GM12878 (cell line): ENCODE measurements at regions of chr15 and their contacts with region 1.

Region 1: GRCh38 chr15:57561041-57561711 is 30.5 kb upstream of the MYZAP start:
- DNase-seq: peak; percentile 26
- ATAC-seq: peak; percentile 95
- H3K4me3 ChIP-seq: no peak overlapping the region
- H3K27ac ChIP-seq: no peak overlapping the region
- H3K4me1 ChIP-seq: peaks cover 3% of the 10 kb centered on the region; the same call in 1 of the 2 replicates
- H3K27me3 ChIP-seq: no peaks in the 10 kb centered on the region
- CTCF ChIP-seq: peak; percentile 82 to 86 (median 83)
- EP300 ChIP-seq: no peak
- POLR2A ChIP-seq: no peak
- RAD21 ChIP-seq: peak; percentile 66

Region 2: DNA sequence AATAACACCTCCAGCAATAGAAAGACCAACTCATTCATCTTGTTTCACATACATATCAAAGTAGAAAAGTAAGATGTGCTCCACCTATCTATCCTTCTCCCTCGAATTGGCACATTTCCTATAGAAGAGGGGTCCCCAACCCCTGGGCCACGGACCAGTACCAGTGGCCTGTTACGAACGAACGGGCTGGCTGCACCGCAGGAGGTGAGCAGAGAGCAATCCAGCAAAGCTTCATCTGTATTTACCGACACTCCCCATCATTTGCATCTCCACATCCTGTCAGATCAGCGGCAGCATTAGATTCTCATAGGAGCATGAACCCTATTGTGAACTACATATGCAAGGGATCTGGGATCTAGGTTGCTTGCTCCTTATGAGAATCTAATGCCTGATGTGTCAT is 279.9 kb before region 1 on chr15:
- CTCF ChIA-PET with region 1: no interaction called
- POLR2A ChIA-PET with region 1: no interaction called
- RAD21 ChIA-PET with region 1: no interaction called
- SMC1A ChIA-PET with region 1: no interaction called
- in situ Hi-C with region 1: no loop called
- intact Hi-C with region 1: no loop called
- DNase-seq: no peak
- ATAC-seq: peak; percentile 63
- H3K4me3 ChIP-seq: peak overlapping the region; percentile 16; the same call in 1 of the 2 replicates
- H3K27ac ChIP-seq: no peak overlapping the region
- H3K4me1 ChIP-seq: peaks cover 37% of the 10 kb centered on the region
- H3K27me3 ChIP-seq: no peaks in the 10 kb centered on the region
- CTCF ChIP-seq: no peak
- EP300 ChIP-seq: no peak
- POLR2A ChIP-seq: no peak
- RAD21 ChIP-seq: no peak

Region 3: DNA sequence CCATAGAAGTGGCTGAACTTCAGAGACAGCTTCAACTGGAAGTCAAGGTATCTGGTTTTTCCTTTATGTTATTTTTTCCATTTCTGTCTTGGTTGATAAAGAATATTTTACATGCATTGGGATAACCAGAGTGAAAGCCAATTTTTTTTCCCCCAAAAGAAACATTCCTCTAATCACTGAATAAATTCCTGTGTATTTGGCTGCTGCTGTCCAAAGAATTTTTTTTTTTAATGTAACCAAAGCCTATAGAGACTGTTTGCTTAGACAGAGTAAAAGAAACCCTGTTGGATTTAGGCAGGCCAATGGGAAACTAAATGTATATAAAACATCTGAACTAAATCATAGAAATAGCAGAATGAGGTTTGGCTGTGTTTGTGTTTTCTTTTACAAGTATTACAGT is 109.6 kb before region 1 on chr15:
- CTCF ChIA-PET with region 1: no interaction called
- POLR2A ChIA-PET with region 1: no interaction called
- RAD21 ChIA-PET with region 1: no interaction called
- SMC1A ChIA-PET with region 1: no interaction called
- in situ Hi-C with region 1: no loop called
- intact Hi-C with region 1: no loop called
- DNase-seq: no peak
- ATAC-seq: no peak
- H3K4me3 ChIP-seq: no peak overlapping the region
- H3K27ac ChIP-seq: no peak overlapping the region
- H3K4me1 ChIP-seq: no peaks in the 10 kb centered on the region
- H3K27me3 ChIP-seq: no peaks in the 10 kb centered on the region; a peak in 1 of 4 replicates
- CTCF ChIP-seq: no peak
- EP300 ChIP-seq: no peak
- POLR2A ChIP-seq: no peak
- RAD21 ChIP-seq: no peak

Region 4: GRCh38 chr15:57541805-57542504 is 19.2 kb before region 1 on chr15:
- CTCF ChIA-PET with region 1: interaction called, 18 read pairs
- POLR2A ChIA-PET with region 1: no interaction called
- RAD21 ChIA-PET with region 1: no interaction called
- SMC1A ChIA-PET with region 1: no interaction called
- in situ Hi-C with region 1: no loop called
- intact Hi-C with region 1: no loop called
- DNase-seq: no peak
- ATAC-seq: peak; percentile 63
- H3K4me3 ChIP-seq: no peak overlapping the region
- H3K27ac ChIP-seq: no peak overlapping the region
- H3K4me1 ChIP-seq: peaks cover 12% of the 10 kb centered on the region
- H3K27me3 ChIP-seq: peaks cover 0 to 1% of the 10 kb centered on the region in 2 experiments; a peak in 2 of 4 replicates
- CTCF ChIP-seq: peak; percentile 72 to 86 (median 83)
- EP300 ChIP-seq: no peak
- POLR2A ChIP-seq: no peak
- RAD21 ChIP-seq: peak; percentile 39

Region 5: DNA sequence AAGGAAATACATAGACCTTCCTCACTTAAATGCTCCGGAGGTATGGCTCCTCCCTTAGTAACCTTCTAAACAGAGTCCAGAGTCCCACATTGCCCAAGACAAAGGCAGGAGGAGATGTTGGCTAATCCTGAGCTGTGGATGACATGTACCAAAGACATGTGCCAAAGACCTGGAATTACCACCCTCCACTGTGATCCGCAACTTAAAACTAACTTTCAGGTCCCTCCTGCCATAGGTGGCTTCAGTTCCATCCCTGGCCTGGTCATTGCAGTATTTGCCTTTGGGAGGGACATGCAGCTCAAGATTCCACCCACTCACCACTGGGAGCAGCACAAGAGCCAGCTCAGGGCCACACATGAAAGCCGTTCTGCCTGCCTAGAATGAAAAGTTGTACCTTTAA is 58.6 kb after region 1 on chr15:
- CTCF ChIA-PET with region 1: no interaction called
- POLR2A ChIA-PET with region 1: no interaction called
- RAD21 ChIA-PET with region 1: no interaction called
- SMC1A ChIA-PET with region 1: no interaction called
- in situ Hi-C with region 1: no loop called
- intact Hi-C with region 1: no loop called
- DNase-seq: no peak
- ATAC-seq: no peak
- H3K4me3 ChIP-seq: no peak overlapping the region
- H3K27ac ChIP-seq: no peak overlapping the region
- H3K4me1 ChIP-seq: no peaks in the 10 kb centered on the region
- H3K27me3 ChIP-seq: peaks cover 0 to 3% of the 10 kb centered on the region in 2 experiments; a peak in 1 of 4 replicates
- CTCF ChIP-seq: no peak
- EP300 ChIP-seq: no peak
- POLR2A ChIP-seq: no peak
- RAD21 ChIP-seq: no peak

Region 6: GRCh38 chr15:57654153-57654852 is 93.1 kb after region 1 on chr15:
- CTCF ChIA-PET with region 1: interaction called, 3 read pairs
- POLR2A ChIA-PET with region 1: no interaction called
- RAD21 ChIA-PET with region 1: no interaction called
- SMC1A ChIA-PET with region 1: interaction called, 8 read pairs
- in situ Hi-C with region 1: no loop called
- intact Hi-C with region 1: loop called (anchors 5 kb)
- DNase-seq: no peak
- ATAC-seq: no peak
- H3K4me3 ChIP-seq: no peak overlapping the region
- H3K27ac ChIP-seq: no peak overlapping the region
- H3K4me1 ChIP-seq: no peaks in the 10 kb centered on the region
- H3K27me3 ChIP-seq: no peaks in the 10 kb centered on the region
- CTCF ChIP-seq: no peak
- EP300 ChIP-seq: no peak
- POLR2A ChIP-seq: no peak
- RAD21 ChIP-seq: no peak

Region 7: GRCh38 chr15:57732526-57733331 is 171.6 kb after region 1 on chr15:
- CTCF ChIA-PET with region 1: interaction called, 4 read pairs
- POLR2A ChIA-PET with region 1: no interaction called
- RAD21 ChIA-PET with region 1: no interaction called
- SMC1A ChIA-PET with region 1: interaction called, 3 read pairs
- in situ Hi-C with region 1: no loop called
- intact Hi-C with region 1: loop called (anchors 10 kb)
- DNase-seq: no peak
- ATAC-seq: peak; percentile 82
- H3K4me3 ChIP-seq: no peak overlapping the region
- H3K27ac ChIP-seq: no peak overlapping the region
- H3K4me1 ChIP-seq: no peaks in the 10 kb centered on the region
- H3K27me3 ChIP-seq: no peaks in the 10 kb centered on the region
- CTCF ChIP-seq: peak; percentile 67 to 95 (median 85)
- EP300 ChIP-seq: no peak
- POLR2A ChIP-seq: no peak
- RAD21 ChIP-seq: peak; percentile 39; the same call in 1 of the 2 replicates

Region 8: DNA sequence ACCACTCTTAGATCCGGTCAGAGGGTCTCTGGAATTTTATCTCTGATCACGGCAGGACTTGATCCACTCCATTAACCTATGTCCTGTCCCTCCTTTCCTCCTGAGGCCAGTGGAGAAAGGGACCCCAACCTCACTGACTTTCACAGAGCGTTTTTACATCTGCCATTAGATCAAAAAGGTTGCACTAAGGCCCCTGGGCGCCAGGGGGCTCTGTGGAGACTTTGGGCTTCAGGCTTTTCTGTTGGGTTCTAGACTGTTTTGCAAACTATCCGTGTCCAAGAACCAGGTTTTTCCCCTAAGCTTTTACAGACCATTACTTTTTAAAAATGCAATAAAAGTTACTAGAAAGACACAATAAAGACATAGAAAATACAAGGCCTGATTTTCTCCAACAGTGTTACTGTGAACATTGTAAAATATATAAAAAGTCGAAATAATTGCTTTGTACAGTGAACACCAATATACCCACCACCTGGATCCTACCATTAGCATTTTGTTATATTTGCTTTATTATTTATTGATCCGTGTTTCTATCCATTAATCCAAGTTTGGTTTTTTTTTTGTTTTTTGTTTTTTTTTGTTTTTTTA is 305.1 kb after region 1 on chr15:
- CTCF ChIA-PET with region 1: interaction called, 34 read pairs
- POLR2A ChIA-PET with region 1: no interaction called
- RAD21 ChIA-PET with region 1: interaction called, 9 read pairs
- SMC1A ChIA-PET with region 1: interaction called, 5 read pairs
- in situ Hi-C with region 1: loop called (anchors 10 kb)
- intact Hi-C with region 1: loop called (anchors 1 kb)
- DNase-seq: no peak
- ATAC-seq: peak; percentile 79
- H3K4me3 ChIP-seq: no peak overlapping the region
- H3K27ac ChIP-seq: no peak overlapping the region
- H3K4me1 ChIP-seq: no peaks in the 10 kb centered on the region
- H3K27me3 ChIP-seq: no peaks in the 10 kb centered on the region
- CTCF ChIP-seq: peak; percentile 66 to 84 (median 74)
- EP300 ChIP-seq: no peak
- POLR2A ChIP-seq: no peak
- RAD21 ChIP-seq: peak; percentile 59